GM12878 (cell line): ENCODE measurements at regions of chr2 and their contacts with region 1.

Region 1: GRCh38 chr2:64730551-64731262 is 77.0 kb upstream of the SERTAD2 start:
- DNase-seq: peak; percentile 69
- ATAC-seq: peak; percentile 39
- H3K4me3 ChIP-seq: peak overlapping the region; percentile 58
- H3K27ac ChIP-seq: peak overlapping the region; percentile 83
- H3K4me1 ChIP-seq: peaks cover 48% of the 10 kb centered on the region
- H3K27me3 ChIP-seq: no peaks in the 10 kb centered on the region
- CTCF ChIP-seq: no peak
- EP300 ChIP-seq: no peak
- POLR2A ChIP-seq: no peak
- RAD21 ChIP-seq: no peak

Region 2: GRCh38 chr2:63553049-63553448 is 1177.7 kb before region 1 on chr2:
- CTCF ChIA-PET with region 1: no interaction called
- POLR2A ChIA-PET with region 1: no interaction called
- RAD21 ChIA-PET with region 1: no interaction called
- SMC1A ChIA-PET with region 1: no interaction called
- in situ Hi-C with region 1: no loop called
- intact Hi-C with region 1: no loop called
- DNase-seq: no peak
- ATAC-seq: no peak
- H3K4me3 ChIP-seq: no peak overlapping the region
- H3K27ac ChIP-seq: no peak overlapping the region
- H3K4me1 ChIP-seq: no peaks in the 10 kb centered on the region; the same call in 1 of the 2 replicates
- H3K27me3 ChIP-seq: no peaks in the 10 kb centered on the region
- CTCF ChIP-seq: no peak
- EP300 ChIP-seq: no peak
- POLR2A ChIP-seq: no peak
- RAD21 ChIP-seq: no peak

Region 3: DNA sequence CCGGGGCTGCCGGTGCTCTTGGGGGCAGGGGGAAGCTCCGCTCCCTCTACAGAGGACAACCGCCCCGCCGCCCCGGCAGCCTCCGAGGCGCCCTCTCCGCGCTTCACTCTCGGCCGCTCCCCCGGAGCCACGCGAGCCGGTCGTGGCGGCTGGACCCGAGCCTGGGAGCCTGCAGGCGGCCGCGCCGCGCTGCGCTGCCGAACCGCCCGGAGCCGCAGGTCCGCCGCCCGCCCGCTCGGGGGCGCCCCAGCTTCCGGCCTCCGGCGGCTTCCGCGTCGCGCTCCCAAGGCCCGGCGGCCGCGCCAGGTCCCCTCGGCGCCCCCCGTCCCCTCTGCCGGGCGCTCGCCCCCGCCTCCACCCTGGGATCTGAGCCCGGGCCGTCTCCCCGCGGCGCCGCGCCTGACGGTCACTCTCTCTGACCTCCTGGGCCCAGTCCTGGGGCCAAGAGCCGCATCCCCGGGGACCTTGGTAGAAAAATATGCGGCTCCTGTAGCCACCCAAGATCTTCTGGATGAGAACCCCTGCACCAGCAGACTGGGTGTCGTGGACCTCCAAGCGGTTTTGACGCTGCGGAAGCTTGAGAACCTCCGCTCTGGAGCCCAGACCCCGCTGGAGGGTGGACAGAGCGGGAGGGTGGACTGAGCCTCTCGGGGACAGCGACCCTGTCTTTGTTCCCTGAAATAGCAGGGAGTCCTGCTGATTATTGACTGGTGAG is 121.3 kb before region 1 on chr2:
- CTCF ChIA-PET with region 1: interaction called, 4 read pairs
- POLR2A ChIA-PET with region 1: no interaction called
- RAD21 ChIA-PET with region 1: interaction called, 11 read pairs
- SMC1A ChIA-PET with region 1: interaction called, 9 read pairs
- in situ Hi-C with region 1: no loop called
- intact Hi-C with region 1: no loop called
- DNase-seq: no peak
- ATAC-seq: peak; percentile 62
- H3K4me3 ChIP-seq: peak overlapping the region; percentile 68
- H3K27ac ChIP-seq: peak overlapping the region; percentile 14; the same call in 1 of the 2 replicates
- H3K4me1 ChIP-seq: peaks cover 38% of the 10 kb centered on the region
- H3K27me3 ChIP-seq: no peaks in the 10 kb centered on the region
- CTCF ChIP-seq: peak; percentile 30 to 63 (median 33); a peak in 4 of 6 replicates
- EP300 ChIP-seq: no peak
- POLR2A ChIP-seq: peak; percentile 70
- RAD21 ChIP-seq: peak; percentile 42

Region 4: GRCh38 chr2:64675860-64676259 is 54.8 kb before region 1 on chr2:
- CTCF ChIA-PET with region 1: interaction called, 3 read pairs
- POLR2A ChIA-PET with region 1: interaction called, 4 read pairs
- RAD21 ChIA-PET with region 1: interaction called, 5 read pairs
- SMC1A ChIA-PET with region 1: interaction called, 10 read pairs
- in situ Hi-C with region 1: no loop called
- intact Hi-C with region 1: no loop called
- DNase-seq: no peak
- ATAC-seq: peak; percentile 38; the same call in 2 of the 3 replicates
- H3K4me3 ChIP-seq: no peak overlapping the region
- H3K27ac ChIP-seq: no peak overlapping the region
- H3K4me1 ChIP-seq: peaks cover 20% of the 10 kb centered on the region
- H3K27me3 ChIP-seq: no peaks in the 10 kb centered on the region
- CTCF ChIP-seq: no peak
- EP300 ChIP-seq: no peak
- POLR2A ChIP-seq: no peak
- RAD21 ChIP-seq: no peak

Region 5: DNA sequence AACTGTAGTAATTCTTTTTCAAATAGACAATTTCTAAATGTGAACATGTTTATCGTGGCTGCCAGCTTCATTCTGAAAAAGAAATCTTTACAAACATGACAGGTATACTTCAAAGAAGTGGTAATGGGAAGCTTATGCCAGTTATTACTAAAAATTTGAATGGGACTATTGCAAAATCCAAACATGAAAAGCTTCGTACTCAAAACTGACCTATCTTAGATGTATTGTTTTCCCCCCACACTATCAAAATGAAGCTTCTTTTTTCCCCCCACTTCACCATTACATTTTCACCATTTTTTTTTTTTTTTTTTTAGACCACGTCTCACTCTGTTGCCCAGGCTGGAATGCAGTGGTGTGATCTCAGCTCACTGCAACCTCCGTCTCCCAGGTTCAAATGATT is 26.5 kb before region 1 on chr2:
- CTCF ChIA-PET with region 1: interaction called, 22 read pairs
- POLR2A ChIA-PET with region 1: interaction called, 35 read pairs
- RAD21 ChIA-PET with region 1: interaction called, 49 read pairs
- SMC1A ChIA-PET with region 1: interaction called, 105 read pairs
- in situ Hi-C with region 1: no loop called
- intact Hi-C with region 1: loop called (anchors 1 kb)
- DNase-seq: no peak
- ATAC-seq: peak; percentile 14
- H3K4me3 ChIP-seq: 0 out of 2 replicates have a peak overlapping the region, but pooled peaks have one; percentile 7
- H3K27ac ChIP-seq: peak overlapping the region; percentile 54
- H3K4me1 ChIP-seq: peaks cover 30% of the 10 kb centered on the region
- H3K27me3 ChIP-seq: no peaks in the 10 kb centered on the region
- CTCF ChIP-seq: no peak
- EP300 ChIP-seq: no peak
- POLR2A ChIP-seq: no peak
- RAD21 ChIP-seq: no peak

Region 6: GRCh38 chr2:64745562-64745961 is 14.9 kb after region 1 on chr2:
- CTCF ChIA-PET with region 1: interaction called, 55 read pairs
- POLR2A ChIA-PET with region 1: interaction called, 115 read pairs
- RAD21 ChIA-PET with region 1: interaction called, 216 read pairs
- SMC1A ChIA-PET with region 1: interaction called, 439 read pairs
- in situ Hi-C with region 1: no loop called
- intact Hi-C with region 1: loop called (anchors 1 kb)
- DNase-seq: no peak
- ATAC-seq: peak; percentile 39
- H3K4me3 ChIP-seq: peak overlapping the region; percentile 46
- H3K27ac ChIP-seq: peak overlapping the region; percentile 10
- H3K4me1 ChIP-seq: no peaks in the 10 kb centered on the region
- H3K27me3 ChIP-seq: no peaks in the 10 kb centered on the region
- CTCF ChIP-seq: no peak
- EP300 ChIP-seq: no peak
- POLR2A ChIP-seq: no peak
- RAD21 ChIP-seq: no peak

Region 7: DNA sequence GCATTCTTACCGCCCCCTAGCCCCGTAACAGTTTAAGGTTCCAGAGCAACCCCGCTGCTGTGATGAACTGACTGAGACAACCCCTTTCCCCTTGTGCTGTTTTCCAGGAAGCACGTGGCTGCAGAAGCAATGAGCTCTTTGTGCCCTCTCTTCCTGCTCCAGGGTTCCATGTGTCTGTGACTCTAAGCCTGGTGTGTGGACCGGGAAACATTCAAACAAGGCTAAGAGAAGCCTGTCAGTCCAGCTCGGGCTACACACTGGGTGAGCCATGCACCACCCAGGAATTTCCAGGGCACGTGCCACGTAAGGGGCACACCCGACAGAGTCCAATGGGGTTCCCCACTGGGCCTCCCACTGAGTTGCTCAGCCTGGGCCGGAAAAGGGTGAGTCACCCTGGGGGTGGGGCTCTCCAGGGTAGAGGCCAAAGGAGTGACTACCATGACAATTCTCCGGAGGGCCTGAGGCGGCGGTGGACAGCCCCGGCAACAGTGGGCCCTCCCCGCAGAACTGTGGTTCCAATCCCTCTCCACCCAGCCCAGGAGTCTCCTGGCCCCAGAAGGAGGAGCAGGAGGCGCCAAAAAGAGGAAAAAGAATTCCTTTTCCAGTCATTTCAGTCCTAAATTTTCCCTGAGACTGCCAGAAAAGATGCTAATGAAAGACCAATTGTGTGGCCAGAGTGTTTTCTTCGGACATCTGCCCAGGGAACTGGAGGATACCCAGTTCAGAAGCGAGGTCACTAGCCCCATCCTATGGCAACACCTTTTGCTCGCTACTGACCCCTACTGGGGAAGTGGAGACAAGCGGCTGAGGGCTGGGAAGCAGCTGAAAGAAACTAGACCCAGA is 100.6 kb after region 1 on chr2:
- CTCF ChIA-PET with region 1: interaction called, 8 read pairs
- POLR2A ChIA-PET with region 1: interaction called, 7 read pairs
- RAD21 ChIA-PET with region 1: interaction called, 11 read pairs
- SMC1A ChIA-PET with region 1: interaction called, 16 read pairs
- in situ Hi-C with region 1: no loop called
- intact Hi-C with region 1: loop called (anchors 1 kb)
- DNase-seq: peak; percentile 71
- ATAC-seq: peak; percentile 96
- H3K4me3 ChIP-seq: peak overlapping the region; percentile 19; the same call in 1 of the 2 replicates
- H3K27ac ChIP-seq: peak overlapping the region; percentile 80
- H3K4me1 ChIP-seq: peaks cover 12% of the 10 kb centered on the region
- H3K27me3 ChIP-seq: no peaks in the 10 kb centered on the region
- CTCF ChIP-seq: peak; percentile 80 to 99 (median 98)
- EP300 ChIP-seq: 0 out of 4 replicates have a peak, but pooled peaks of 1 of the 2 experiments have one; percentile 10
- POLR2A ChIP-seq: no peak; the same call in none of the 2 replicates
- RAD21 ChIP-seq: peak; percentile 85

Region 8: DNA sequence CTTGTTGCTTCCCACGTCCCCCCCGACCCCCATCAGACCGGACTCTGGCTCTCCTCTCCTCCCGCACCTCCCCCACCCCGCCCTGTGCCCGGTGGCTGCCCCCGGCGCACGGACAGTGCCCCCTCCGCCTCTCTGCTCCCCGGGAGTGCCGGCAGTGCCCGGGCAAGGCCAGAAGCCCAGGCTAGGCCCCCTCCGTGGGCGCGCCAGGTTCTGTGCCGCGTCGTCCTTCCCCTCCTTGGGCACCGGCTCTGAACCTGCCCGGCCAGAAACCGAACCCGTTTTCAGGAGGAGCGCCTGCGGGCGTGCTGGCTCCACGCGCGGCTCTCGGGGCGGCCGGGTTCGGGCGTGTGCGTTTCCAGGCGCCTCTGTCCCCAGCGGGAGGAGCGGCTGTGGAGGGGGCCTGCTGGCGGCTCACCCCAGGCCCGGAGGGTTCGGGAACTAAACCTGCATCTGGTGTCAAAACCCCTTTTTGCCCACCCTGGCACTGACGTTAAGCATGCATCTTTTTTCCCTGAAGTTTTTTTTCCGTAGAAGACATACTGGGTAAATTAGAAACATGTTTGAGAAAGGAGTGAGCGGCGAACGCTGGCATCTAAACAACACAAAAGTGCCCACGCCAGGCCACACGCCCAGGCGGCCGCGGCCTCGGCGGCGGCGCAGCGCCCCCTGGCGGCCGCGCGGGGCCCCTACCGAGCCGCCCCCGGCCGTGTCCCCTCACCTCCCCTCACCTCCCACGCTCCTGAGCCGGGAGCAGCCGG is 134.5 kb after region 1 on chr2:
- CTCF ChIA-PET with region 1: interaction called, 3 read pairs
- POLR2A ChIA-PET with region 1: interaction called, 4 read pairs
- RAD21 ChIA-PET with region 1: interaction called, 9 read pairs
- SMC1A ChIA-PET with region 1: interaction called, 11 read pairs
- in situ Hi-C with region 1: no loop called
- intact Hi-C with region 1: loop called (anchors 2 kb)
- DNase-seq: no peak
- ATAC-seq: peak; percentile 84
- H3K4me3 ChIP-seq: peak overlapping the region; percentile 82
- H3K27ac ChIP-seq: peak overlapping the region; percentile 70
- H3K4me1 ChIP-seq: peaks cover 49% of the 10 kb centered on the region
- H3K27me3 ChIP-seq: no peaks in the 10 kb centered on the region
- CTCF ChIP-seq: peak; percentile 62 to 79 (median 64); a peak in 5 of 6 replicates
- EP300 ChIP-seq: no peak
- POLR2A ChIP-seq: no peak
- RAD21 ChIP-seq: peak; percentile 71